ENCODE measurements at regions of chr20 and their contacts with region 1.

Region 1: GRCh38 chr20:44388466-44389023 is 33.0 kb downstream of the HNF4A start:
- DNase-seq: peak; percentile 83 to 95
- H3K4me3 ChIP-seq: peak overlapping the region in 3 of 4 experiments; percentile 5 to 50 (median 32); a peak in 4 of 8 replicates
- H3K27ac ChIP-seq: no peak overlapping the region
- H3K4me1 ChIP-seq: peaks cover 0 to 5% (median 4%) of the 10 kb centered on the region in 4 experiments; a peak in 4 of 7 replicates
- H3K27me3 ChIP-seq: peaks cover 0 to 4% (median 0%) of the 10 kb centered on the region in 4 experiments; a peak in 3 of 7 replicates
- CTCF ChIP-seq: peak; percentile 90 to 93 (median 92)
- EP300 ChIP-seq: no peak
- POLR2A ChIP-seq: no peak
- RAD21 ChIP-seq: peak; percentile 89 to 90

Region 2: DNA sequence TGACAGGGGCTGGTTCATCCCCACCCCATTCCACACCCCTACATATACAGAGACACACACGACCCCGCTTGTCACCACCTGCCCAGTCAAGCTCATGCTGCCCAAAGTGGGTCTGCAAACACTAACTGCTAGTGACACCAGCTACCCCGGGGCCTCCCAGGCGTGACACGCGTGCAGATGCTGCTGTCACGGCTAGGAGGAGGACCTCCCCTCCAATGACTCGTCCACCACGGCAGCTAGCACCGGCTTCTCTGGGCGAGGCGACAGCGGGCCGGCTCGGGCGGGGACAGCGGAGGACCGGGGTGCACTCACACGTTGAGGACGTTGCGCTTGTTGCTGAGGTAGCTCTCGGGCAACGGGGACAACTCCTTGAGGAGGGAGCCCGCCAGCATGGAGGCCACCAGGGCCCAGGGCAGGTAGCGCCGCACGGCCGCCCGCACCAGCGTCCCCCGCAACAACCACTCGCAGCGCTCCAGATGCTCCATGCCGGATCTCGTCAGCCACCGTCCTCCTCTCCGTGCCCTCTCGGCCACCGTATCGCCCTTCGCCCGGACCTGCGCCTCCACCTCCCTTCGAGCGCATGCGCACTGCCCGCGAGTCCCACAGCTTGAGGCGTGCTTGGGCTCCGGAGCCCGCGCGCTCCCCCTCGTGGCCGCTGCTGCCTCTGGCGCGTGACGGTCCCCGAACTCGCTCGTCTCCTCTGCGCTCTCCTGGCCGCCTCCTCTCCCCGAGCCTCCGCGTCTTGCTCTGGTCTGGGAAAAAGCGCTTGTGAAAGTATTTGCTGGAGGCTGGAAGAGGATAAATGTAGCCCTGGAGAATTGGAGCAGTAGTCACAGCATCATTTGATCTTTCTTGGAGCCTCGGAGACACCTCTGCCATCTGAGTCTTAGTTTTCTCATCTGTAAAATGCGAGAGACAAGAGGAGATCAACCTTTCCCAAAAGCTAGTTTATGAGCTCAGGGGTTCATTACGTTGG is 77.6 kb before region 1 on chr20 and contains the start of gene FITM2:
- CTCF ChIA-PET with region 1: interaction called, 10 read pairs
- POLR2A ChIA-PET with region 1: no interaction called
- DNase-seq: peak; percentile 93 to 99
- H3K4me3 ChIP-seq: peak within 1 kb of the TSS; percentile 57 to 79 (median 76)
- H3K27ac ChIP-seq: no peak within 1 kb of the TSS
- H3K4me1 ChIP-seq: peaks cover 0 to 5% (median 2%) of the 10 kb centered on the region in 4 experiments; a peak in 2 of 7 replicates
- H3K27me3 ChIP-seq: peaks cover 0 to 18% (median 8%) of the 10 kb centered on the region in 4 experiments; a peak in 4 of 7 replicates
- CTCF ChIP-seq: peak; percentile 90 to 93 (median 92)
- EP300 ChIP-seq: no peak
- POLR2A ChIP-seq: 0 out of 3 replicates have a peak, but pooled peaks of 1 of the 2 experiments have one; percentile 31
- RAD21 ChIP-seq: peak; percentile 73 to 77
- total RNA-seq, gene FITM2: 2.0 and 2.1 TPM in 2 replicates

Region 3: DNA sequence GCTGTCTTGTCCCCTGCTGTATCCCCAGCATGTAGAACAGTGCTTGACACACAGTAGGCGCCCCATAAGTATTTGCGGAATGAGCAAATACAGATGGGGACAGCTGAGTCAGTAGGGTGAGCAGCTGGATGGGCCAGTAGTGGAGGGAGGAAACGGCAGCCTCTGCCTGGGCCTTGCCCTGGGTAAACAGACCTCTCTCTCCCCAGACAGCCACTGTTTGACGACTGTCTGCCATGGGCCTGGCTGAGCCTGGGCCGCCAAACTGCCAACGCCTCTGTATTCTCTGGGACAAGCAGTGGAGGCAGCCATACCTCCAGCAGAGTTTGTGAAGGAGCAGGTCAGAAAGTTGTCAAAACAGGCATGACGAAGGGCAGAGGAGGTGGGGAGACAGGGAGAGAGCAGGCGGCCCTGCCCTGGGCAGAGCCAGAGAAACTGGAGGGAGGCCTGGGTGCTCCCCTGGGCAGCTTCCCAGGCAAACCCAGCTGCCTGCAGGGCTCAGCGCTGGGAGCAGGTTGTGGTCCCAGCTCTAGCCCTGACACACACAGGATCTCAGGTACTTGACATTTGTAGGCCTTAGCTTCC is 17.8 kb before region 1 on chr20:
- CTCF ChIA-PET with region 1: interaction called, 11 read pairs
- POLR2A ChIA-PET with region 1: interaction called, 4 read pairs
- DNase-seq: no peak
- H3K4me3 ChIP-seq: no peak overlapping the region
- H3K27ac ChIP-seq: no peak overlapping the region
- H3K4me1 ChIP-seq: peaks cover 0 to 5% (median 0%) of the 10 kb centered on the region in 4 experiments; a peak in 3 of 7 replicates
- H3K27me3 ChIP-seq: no peaks in the 10 kb centered on the region
- CTCF ChIP-seq: no peak
- EP300 ChIP-seq: no peak
- POLR2A ChIP-seq: no peak
- RAD21 ChIP-seq: no peak

Region 4: DNA sequence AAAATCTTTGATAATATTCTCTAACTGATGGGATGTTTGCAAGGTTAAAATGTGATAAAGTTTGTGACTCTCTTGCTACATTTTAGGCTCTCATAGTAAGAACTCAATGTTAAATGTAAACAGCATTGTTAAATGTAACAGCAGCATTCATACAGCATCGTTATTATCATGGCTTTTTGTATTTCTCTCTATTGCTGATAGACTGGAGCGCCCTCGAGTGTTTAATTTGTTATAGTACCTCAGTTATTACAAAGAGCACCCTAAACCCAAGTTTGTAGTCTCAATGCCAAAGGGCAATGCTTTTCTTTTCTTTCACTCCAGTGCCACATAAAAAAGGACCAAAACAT is 72.2 kb after region 1 on chr20:
- CTCF ChIA-PET with region 1: interaction called, 15 read pairs
- POLR2A ChIA-PET with region 1: no interaction called
- DNase-seq: no peak
- H3K4me3 ChIP-seq: no peak overlapping the region
- H3K27ac ChIP-seq: no peak overlapping the region
- H3K4me1 ChIP-seq: no peaks in the 10 kb centered on the region
- H3K27me3 ChIP-seq: no peaks in the 10 kb centered on the region
- CTCF ChIP-seq: peak in 2 of 3 experiments; percentile 35 to 52; a peak in 2 of 4 replicates
- EP300 ChIP-seq: no peak
- POLR2A ChIP-seq: no peak
- RAD21 ChIP-seq: peak; percentile 62 to 66

Region 5: DNA sequence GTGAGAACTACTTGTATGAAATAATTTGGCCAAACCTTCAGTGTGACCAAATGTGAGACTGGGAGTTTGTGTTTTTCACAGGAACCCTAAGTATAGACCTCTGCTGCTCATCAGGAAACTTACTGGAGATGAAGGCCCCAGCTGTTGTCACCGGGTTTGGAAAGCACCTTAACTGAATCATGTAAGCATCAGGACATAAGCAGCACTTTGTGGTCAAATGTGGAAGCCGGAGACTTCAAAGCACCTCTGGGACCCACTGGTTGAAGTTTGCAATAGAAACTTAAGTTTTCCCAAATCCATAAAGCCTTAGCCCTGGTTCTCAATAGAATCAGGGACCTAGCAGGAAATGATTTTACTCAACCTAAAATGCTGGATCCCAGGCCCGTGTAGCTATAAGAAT is 101.4 kb after region 1 on chr20:
- CTCF ChIA-PET with region 1: no interaction called
- POLR2A ChIA-PET with region 1: no interaction called
- DNase-seq: no peak
- H3K4me3 ChIP-seq: no peak overlapping the region
- H3K27ac ChIP-seq: no peak overlapping the region
- H3K4me1 ChIP-seq: no peaks in the 10 kb centered on the region
- H3K27me3 ChIP-seq: no peaks in the 10 kb centered on the region
- CTCF ChIP-seq: no peak
- EP300 ChIP-seq: no peak
- POLR2A ChIP-seq: no peak
- RAD21 ChIP-seq: no peak

Region 6: DNA sequence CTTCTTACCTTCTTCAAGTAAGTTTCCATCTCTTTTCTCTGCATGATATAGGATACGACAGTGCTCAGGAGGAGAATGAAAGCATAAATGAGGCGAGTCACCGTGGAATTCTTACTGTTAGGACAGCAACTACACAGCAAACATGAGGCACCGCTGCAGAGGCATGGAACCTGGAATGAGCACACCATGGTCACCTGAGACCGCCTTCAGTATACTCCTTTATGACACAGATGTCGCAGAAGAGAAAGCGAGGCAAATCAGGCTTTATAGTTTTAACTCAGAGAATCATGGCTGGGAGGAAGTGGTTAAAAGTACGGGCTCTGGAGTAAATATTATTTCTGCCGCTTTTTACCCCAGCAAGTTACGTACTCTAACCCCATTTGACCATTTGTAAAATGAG is 125.3 kb after region 1 on chr20:
- CTCF ChIA-PET with region 1: no interaction called
- POLR2A ChIA-PET with region 1: no interaction called
- DNase-seq: no peak
- H3K4me3 ChIP-seq: no peak overlapping the region
- H3K27ac ChIP-seq: no peak overlapping the region
- H3K4me1 ChIP-seq: no peaks in the 10 kb centered on the region
- H3K27me3 ChIP-seq: no peaks in the 10 kb centered on the region
- CTCF ChIP-seq: no peak
- EP300 ChIP-seq: no peak
- POLR2A ChIP-seq: no peak
- RAD21 ChIP-seq: no peak

Region 7: DNA sequence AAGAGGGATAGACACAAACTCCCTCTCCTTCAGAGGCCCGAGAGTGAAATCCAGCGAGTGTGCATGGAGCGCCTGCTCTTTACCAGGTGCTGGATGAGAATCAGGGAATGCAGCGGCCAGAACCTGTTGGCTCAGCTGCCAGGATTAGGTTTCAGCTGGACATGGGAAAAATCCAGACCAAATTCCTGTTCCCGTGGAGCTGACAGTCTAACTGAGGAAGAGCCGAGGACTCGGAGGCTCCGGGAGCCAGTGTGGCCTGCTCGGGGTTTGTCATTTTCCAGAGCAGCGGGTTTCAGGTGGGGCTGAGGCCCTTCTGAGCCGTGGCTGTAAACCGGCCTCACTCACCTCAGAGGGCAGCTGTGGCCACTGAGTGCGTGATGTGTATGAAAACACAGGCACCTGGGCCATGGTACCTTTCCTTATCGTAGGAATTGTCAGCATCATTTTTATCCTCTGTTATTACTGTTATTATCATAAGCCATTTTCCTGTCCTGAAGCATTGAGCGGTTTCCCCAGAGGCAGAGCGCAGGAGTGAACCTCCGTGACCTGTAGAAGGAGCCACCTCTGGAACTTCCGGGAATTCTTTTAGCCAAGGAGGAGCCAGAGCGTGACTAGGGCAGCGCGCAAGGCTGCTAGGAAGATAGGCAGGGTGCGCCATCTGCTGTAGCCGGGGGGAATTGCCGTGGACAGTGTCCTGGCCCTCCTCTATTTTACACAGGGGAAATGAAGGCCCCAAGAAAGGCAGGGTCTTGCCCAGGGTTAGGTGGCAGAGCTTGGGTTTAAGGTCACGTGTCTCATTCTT is 221.2 kb after region 1 on chr20:
- CTCF ChIA-PET with region 1: interaction called, 10 read pairs
- POLR2A ChIA-PET with region 1: no interaction called
- DNase-seq: peak; percentile 85 to 98
- H3K4me3 ChIP-seq: no peak overlapping the region
- H3K27ac ChIP-seq: no peak overlapping the region
- H3K4me1 ChIP-seq: peaks cover 0 to 4% (median under 1%) of the 10 kb centered on the region in 4 experiments; a peak in 3 of 7 replicates
- H3K27me3 ChIP-seq: no peaks in the 10 kb centered on the region
- CTCF ChIP-seq: peak; percentile 96 to 99 (median 96)
- EP300 ChIP-seq: no peak
- POLR2A ChIP-seq: no peak
- RAD21 ChIP-seq: peak; percentile 99

Region 8: GRCh38 chr20:44738813-44739477 is 350.4 kb after region 1 on chr20:
- CTCF ChIA-PET with region 1: no interaction called
- POLR2A ChIA-PET with region 1: no interaction called
- DNase-seq: peak in 1 of 2 experiments; percentile 75
- H3K4me3 ChIP-seq: peak overlapping the region in 1 of 4 experiments; percentile 12; a peak in 1 of 8 replicates
- H3K27ac ChIP-seq: no peak overlapping the region
- H3K4me1 ChIP-seq: peaks cover 0 to 2% (median 0%) of the 10 kb centered on the region in 4 experiments; a peak in 1 of 7 replicates
- H3K27me3 ChIP-seq: peaks cover 0 to 9% (median 4%) of the 10 kb centered on the region in 4 experiments; a peak in 5 of 7 replicates
- CTCF ChIP-seq: no peak
- EP300 ChIP-seq: no peak
- POLR2A ChIP-seq: no peak
- RAD21 ChIP-seq: no peak

Measured in H1 (cell line).